Activated T-helper 2 cell treated with anti-CD3 and anti-CD28 coated beads, Interferon-gamma antibody, Interleukin-2, Interleukin-4, amounts not matched to agents 10 μg/mL and 5 μg/mL and 100 μg/mL, durations not matched to agents 14 hours and 24 hours and 36 hours (primary cell): ENCODE measurements at regions of chr20 and their contacts with region 1.

Region 1: GRCh38 chr20:50338479-50339391 is 148.1 kb downstream of the CEBPB start:
- DNase-seq: peak; percentile 71
- H3K4me3 Mint-ChIP-seq: peak overlapping the region; percentile 75
- H3K27ac Mint-ChIP-seq: peak overlapping the region; percentile 92
- H3K4me1 Mint-ChIP-seq: peaks cover 61% of the 10 kb centered on the region
- H3K27me3 Mint-ChIP-seq: no peaks in the 10 kb centered on the region

Region 2: GRCh38 chr20:50115591-50116372 is 223.0 kb before region 1 on chr20:
- intact Hi-C with region 1: loop called (anchors 5 kb)
- DNase-seq: peak; percentile 86
- H3K4me3 Mint-ChIP-seq: peak overlapping the region; percentile 85
- H3K27ac Mint-ChIP-seq: peak overlapping the region; percentile 95
- H3K4me1 Mint-ChIP-seq: peaks cover 43% of the 10 kb centered on the region
- H3K27me3 Mint-ChIP-seq: no peaks in the 10 kb centered on the region

Region 3: GRCh38 chr20:50224531-50225255 is 114.0 kb before region 1 on chr20:
- intact Hi-C with region 1: loop called (anchors 5 kb)
- DNase-seq: no peak
- H3K4me3 Mint-ChIP-seq: no peak overlapping the region
- H3K27ac Mint-ChIP-seq: peak overlapping the region; percentile 15
- H3K4me1 Mint-ChIP-seq: peaks cover 15% of the 10 kb centered on the region
- H3K27me3 Mint-ChIP-seq: no peaks in the 10 kb centered on the region

Region 4: DNA sequence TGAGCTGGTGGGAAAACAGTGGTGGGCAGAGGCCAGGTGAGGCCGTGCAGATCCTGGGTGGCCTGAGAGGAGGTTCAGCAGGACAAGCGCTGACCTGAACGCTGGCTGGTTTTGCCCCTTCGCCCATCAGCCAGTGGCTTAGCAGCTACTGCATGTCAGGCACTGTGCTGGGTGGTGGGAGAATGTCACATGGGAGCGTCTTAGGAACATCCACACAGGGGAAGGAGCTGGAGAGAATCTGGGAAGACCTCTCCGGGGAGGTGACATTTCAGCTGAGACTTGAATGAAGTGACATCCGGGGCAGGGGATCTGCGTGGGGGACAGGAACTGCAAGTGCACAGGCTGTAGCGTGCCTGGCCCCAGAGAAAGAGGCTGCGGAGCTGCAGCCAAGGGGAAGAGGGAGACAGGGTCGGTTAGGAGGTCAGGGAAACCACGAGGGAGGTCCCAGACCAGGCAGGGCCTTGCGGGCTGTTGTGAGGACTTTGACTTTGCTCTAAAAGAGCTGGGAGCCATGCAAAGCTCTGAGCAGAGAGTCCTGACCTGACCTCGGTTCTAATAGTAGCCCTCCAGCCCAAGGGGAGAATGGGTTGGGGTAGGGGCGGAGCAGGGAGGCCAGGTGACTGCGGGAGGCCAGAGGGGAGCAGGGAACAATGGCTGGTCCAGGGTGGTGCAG is 14.7 kb after region 1 on chr20:
- intact Hi-C with region 1: loop called (anchors 1 kb)
- DNase-seq: no peak
- H3K4me3 Mint-ChIP-seq: no peak overlapping the region
- H3K27ac Mint-ChIP-seq: no peak overlapping the region
- H3K4me1 Mint-ChIP-seq: peaks cover 29% of the 10 kb centered on the region
- H3K27me3 Mint-ChIP-seq: no peaks in the 10 kb centered on the region

Region 5: GRCh38 chr20:50439539-50440453 is 101.1 kb after region 1 on chr20:
- intact Hi-C with region 1: loop called (anchors 1 kb)
- DNase-seq: no peak
- H3K4me3 Mint-ChIP-seq: no peak overlapping the region
- H3K27ac Mint-ChIP-seq: peak overlapping the region; percentile 89
- H3K4me1 Mint-ChIP-seq: peaks cover 28% of the 10 kb centered on the region
- H3K27me3 Mint-ChIP-seq: no peaks in the 10 kb centered on the region

Region 6: DNA sequence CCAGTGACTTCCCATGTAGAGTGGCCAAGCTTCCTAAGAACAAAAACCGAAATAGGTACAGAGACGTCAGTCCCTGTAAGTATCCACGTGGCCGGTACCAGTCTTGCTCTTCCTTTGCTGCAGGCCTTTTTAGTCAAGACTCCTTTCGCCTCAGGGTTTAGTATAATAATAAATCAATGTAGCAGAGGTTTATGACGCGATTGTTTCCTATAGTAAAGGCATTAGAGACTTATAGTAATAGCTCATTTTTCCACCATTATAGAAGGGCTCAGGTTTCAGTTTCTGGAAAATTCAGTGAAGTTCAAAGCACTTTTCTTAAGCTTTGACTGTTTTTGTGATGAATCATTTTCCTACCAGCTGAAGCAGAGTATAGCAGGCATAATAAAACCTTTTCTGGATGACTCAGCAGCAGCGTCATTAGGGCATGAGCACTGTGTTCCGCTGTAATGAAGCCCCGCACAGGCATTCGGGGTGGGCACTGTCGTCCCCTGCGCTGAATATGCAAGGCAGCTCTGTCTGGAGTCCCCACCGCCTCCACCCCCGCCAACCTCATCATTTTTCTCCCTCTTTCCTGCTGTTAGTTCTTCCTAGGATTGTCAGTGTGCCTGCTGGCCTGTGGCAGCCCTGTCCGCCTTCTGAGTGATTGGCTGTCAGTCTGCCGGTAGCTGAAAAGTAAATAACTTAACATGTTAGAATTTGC is 222.8 kb after region 1 on chr20:
- intact Hi-C with region 1: loop called (anchors 5 kb)
- DNase-seq: peak; percentile 27
- H3K4me3 Mint-ChIP-seq: peak overlapping the region; percentile 81
- H3K27ac Mint-ChIP-seq: peak overlapping the region; percentile 98
- H3K4me1 Mint-ChIP-seq: peaks cover 60% of the 10 kb centered on the region
- H3K27me3 Mint-ChIP-seq: no peaks in the 10 kb centered on the region